T-cell (primary cell): ENCODE measurements at regions of chr3 and their contacts with region 1.

Region 1: DNA sequence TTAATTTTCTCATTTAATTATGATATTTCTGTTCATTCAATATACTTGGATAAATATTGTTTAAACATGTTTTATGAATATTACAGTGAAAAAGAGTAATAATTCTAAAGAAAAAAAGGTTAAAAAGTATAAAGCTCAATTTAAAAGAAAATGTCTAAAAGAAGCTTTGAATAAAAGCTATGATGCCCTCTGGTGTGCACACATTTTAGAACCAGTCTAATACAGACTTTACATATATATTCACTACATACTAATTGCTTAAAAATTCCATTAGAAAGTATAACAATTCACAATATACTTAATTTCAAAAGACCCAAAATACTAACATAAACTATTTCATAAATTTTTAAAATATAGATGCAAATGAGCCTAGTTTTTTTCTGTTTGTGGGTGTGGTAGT is 909.1 kb upstream of the ROBO1 start:
- DNase-seq: no peak
- ATAC-seq: no peak
- H3K4me3 ChIP-seq: no peak overlapping the region
- H3K4me3 Mint-ChIP-seq: no peak overlapping the region
- H3K27ac ChIP-seq: no peak overlapping the region
- H3K27ac Mint-ChIP-seq: no peak overlapping the region
- H3K4me1 ChIP-seq: no peaks in the 10 kb centered on the region
- H3K4me1 Mint-ChIP-seq: no peaks in the 10 kb centered on the region
- H3K27me3 ChIP-seq: no peaks in the 10 kb centered on the region
- H3K27me3 Mint-ChIP-seq: no peaks in the 10 kb centered on the region

Region 2: GRCh38 chr3:80688814-80689213 is 11.9 kb after region 1 on chr3:
- CTCF ChIA-PET with region 1: no interaction called
- POLR2A ChIA-PET with region 1: interaction called in 1 of 2 experiments, 10 read pairs
- DNase-seq: no peak
- ATAC-seq: no peak
- H3K4me3 ChIP-seq: no peak overlapping the region
- H3K4me3 Mint-ChIP-seq: no peak overlapping the region
- H3K27ac ChIP-seq: no peak overlapping the region
- H3K27ac Mint-ChIP-seq: no peak overlapping the region
- H3K4me1 ChIP-seq: no peaks in the 10 kb centered on the region
- H3K4me1 Mint-ChIP-seq: no peaks in the 10 kb centered on the region
- H3K27me3 ChIP-seq: no peaks in the 10 kb centered on the region
- H3K27me3 Mint-ChIP-seq: no peaks in the 10 kb centered on the region